Psoas muscle (tissue), 8 donors: ENCODE measurements at regions of chr11 and their contacts with region 1.

Region 1: DNA sequence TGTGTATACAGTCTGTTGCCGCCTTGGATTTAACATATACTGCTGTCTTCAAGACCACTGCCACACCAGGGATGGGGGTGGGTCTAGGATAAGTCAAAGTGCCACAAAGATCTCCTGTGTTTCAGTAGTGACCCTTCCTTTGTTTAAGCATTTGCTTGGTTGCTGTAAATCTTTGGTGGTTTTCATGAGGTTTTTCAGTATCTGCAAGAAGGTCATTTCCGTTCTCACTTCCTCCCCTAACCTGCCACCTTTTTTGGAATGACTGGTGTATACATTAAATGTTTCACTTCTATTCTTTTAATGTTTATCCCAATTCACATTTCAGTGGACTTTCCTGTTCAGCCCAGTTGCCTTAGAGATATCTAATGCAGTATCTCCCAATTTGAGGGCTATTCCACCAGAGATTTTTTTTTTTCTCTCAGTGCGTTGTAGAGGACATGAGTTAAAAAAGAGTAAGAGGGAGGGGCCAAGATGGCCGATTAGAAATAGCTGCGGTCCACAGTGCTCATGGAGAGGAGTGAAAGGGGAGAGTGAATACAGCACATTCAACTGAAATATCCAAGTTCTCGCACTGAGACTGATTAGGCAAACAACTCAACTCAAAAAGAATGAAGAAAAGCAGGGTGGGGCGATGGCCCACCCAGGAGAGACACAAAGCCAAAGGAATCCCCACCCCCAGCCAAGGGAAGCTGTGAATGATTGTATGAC is 43.2 kb downstream of the USP47 start:
- DNase-seq: no peak
- ATAC-seq: no peak
- H3K4me3 ChIP-seq: no peak overlapping the region
- H3K27ac ChIP-seq: no peak overlapping the region
- H3K4me1 ChIP-seq: peaks cover 5% of the 10 kb centered on the region
- H3K27me3 ChIP-seq: no peaks in the 10 kb centered on the region
- CTCF ChIP-seq: no peak

Region 2: DNA sequence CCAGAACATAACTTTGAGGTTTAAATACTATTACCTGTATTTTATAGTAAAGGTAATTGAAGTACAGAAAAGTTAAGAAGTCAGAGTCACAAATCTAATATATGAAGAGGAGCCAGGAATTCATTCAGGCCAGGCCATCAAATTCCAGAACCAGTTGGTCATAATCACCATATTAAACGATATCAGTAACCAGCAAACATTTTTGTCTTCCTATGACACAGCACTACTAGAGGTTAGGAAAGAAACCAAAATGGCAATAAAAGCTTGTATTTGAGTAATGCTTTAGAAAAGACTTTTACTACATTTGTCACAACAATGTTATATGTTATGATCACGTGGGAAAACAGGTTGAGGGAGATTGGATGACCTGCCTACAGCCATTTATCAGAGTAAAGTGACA is 61.3 kb after region 1 on chr11:
- intact Hi-C with region 1: loop called in 1 of 2 experiments (anchors 10 kb)
- DNase-seq: no peak
- ATAC-seq: peak in 3 of 4 donors; percentile 47 to 61 (median 57)
- H3K4me3 ChIP-seq: no peak overlapping the region
- H3K27ac ChIP-seq: peak overlapping the region; percentile 6
- H3K4me1 ChIP-seq: peaks cover 10% of the 10 kb centered on the region
- H3K27me3 ChIP-seq: no peaks in the 10 kb centered on the region
- CTCF ChIP-seq: no peak